Stomach (tissue), 19 donors: ENCODE measurements at regions of chr9 and their contacts with region 1.

Region 1: DNA sequence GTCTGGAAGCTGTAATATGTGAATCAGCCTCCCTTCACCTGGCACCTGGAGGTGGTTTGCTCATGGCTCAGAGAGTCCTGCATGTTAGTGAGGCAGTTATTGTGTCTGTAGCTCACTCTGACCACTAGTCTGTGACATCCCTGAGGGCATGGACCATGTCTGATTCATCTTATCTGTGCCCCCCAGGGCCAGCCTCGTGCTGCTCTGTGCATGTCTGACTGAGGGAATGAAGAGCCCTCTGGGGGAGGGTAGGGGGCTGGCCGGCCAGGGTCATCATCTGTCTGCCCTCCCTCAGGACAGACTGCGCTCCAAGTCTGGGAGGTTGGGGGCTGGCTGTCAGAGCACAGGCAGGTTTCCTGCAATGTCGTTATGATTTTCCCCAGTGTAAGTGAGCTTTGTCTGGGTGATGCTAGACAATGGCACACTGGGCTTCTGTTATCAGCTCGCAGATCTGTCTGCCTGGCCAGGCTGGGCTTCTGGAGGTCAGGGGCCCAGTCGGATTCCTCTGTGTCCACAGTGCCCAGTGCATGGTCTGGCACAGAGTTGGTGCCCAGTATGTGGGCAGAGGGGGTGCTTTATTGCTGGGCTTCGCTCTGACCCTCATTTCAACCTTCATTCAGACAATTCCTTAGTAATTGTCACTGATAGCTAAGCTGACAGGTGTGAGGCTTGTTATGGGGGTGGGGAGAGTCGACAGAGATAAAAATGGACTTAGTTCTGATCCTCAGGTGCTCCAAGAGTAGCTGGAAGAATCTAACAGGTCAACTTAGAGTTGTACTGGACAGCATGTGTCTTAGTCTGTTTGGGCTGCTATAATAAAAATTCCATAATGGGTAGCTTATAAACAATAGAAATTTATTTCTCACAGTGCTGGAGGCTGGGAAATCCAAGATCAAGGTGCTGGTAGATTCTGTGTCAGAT is 85.7 kb upstream of the SHB start:
- DNase-seq: no peak
- H3K4me3 ChIP-seq: no peak overlapping the region
- H3K27ac ChIP-seq: no peak overlapping the region
- H3K4me1 ChIP-seq: peaks cover 0 to 11% (median 3%) of the 10 kb centered on the region in 4 donors
- H3K27me3 ChIP-seq: peaks cover 0 to 13% (median 0%) of the 10 kb centered on the region in 3 donors
- CTCF ChIP-seq: no peak
- EP300 ChIP-seq: no peak
- POLR2A ChIP-seq: no peak

Region 2: DNA sequence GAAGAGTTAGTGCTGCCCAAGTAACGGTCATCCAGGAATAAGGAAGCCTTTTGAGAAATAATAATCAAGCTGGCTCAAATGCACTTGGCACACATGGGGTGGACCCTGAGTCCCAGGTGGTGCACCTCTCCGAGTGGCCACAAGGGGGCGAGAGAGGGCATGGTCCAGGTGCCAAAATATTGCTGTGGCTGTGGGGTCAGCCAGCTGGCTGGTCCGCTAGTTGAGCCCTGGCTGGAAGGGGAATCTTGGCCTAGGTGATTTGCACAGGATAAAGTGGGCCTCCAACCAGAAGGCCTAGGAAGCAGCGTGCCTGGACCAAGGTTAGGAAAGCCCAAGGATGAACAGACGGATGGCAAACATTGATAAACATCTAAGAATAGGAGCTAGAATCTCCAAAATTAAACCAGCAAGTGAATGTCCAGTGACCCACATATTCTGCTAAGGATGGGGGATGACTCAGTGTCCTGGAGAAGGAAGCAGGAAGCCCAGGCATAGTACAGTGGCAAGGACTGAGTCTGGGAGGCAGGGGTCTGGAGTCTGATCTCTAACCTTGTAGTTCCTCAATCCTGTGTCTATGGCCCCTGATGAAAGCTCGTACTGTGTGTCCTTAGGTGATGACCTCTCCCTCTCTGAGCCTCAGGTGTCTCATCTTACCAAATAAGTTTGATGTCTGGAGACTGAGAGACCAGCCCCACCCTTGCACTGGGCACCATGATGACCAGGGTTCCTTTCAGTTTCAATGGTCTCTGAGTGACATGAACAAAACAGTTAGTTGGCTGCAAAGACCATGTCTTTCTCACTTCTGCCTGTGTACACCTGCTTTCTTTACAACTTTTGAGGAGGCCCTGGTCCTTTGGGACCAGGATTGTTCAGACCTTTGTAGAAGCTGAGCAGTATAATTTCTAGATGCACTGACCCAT is 66.5 kb before region 1 on chr9:
- intact Hi-C with region 1: no loop called
- DNase-seq: peak; percentile 83
- H3K4me3 ChIP-seq: no peak overlapping the region
- H3K27ac ChIP-seq: no peak overlapping the region
- H3K4me1 ChIP-seq: peaks cover 0 to 14% (median 2%) of the 10 kb centered on the region in 4 donors
- H3K27me3 ChIP-seq: no peaks in the 10 kb centered on the region
- CTCF ChIP-seq: peak in 5 of 7 experiments; percentile 84 to 99 (median 97)
- EP300 ChIP-seq: no peak
- POLR2A ChIP-seq: no peak

Region 3: GRCh38 chr9:38107811-38108304 is 46.9 kb before region 1 on chr9:
- intact Hi-C with region 1: loop called (anchors 10 kb)
- DNase-seq: peak; percentile 33 to 64
- H3K4me3 ChIP-seq: no peak overlapping the region
- H3K27ac ChIP-seq: peak overlapping the region in 3 of 5 donors; percentile 11 to 49 (median 45)
- H3K4me1 ChIP-seq: peaks cover 0 to 12% (median 7%) of the 10 kb centered on the region in 4 donors
- H3K27me3 ChIP-seq: no peaks in the 10 kb centered on the region
- CTCF ChIP-seq: no peak
- EP300 ChIP-seq: no peak
- POLR2A ChIP-seq: no peak